Endothelial cell of umbilical vein (primary cell): ENCODE measurements at regions of chr2 and their contacts with region 1.

Region 1: DNA sequence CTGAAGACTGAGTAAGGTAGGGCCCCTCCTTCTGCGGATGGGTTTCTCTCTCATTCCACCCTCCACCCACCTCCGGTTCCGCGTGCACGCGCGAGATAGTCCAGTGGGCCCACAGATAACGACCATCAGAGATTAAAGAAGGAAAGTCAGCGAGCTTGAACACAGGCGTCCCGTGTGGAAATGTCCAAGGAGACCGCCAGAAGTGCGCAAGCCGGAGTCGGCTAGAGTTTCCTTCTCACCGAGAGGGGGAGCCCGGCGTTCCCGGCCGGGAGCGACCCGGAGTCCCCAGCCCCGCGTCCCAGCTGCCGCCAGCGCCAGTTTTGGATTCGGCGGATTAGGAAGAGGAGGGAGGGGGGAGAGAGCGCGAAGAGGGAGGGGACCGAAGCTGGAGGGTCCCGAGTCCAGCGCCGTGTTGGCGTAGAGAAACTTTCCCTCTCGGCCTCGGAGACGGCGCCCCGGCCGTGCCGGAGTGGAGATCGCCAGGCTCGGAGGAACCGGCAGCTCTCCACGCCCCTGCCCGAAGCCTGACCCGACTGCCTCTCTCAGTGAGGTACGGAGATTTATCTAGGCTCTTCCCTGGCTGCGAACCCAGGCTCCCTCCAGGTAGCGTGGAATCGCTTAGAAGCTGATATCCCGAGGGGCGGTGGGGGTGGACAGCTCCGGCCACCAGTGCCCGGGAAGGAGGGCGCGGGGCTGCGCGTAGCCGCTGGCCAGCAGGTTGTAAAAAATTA is at the start of gene GULP1:
- DNase-seq: peak; percentile 83
- H3K4me3 ChIP-seq: peak within 1 kb of the TSS; percentile 77 to 84 (median 81)
- H3K27ac ChIP-seq: peak within 1 kb of the TSS; percentile 86
- H3K4me1 ChIP-seq: peaks cover 30% of the 10 kb centered on the region
- H3K27me3 ChIP-seq: no peaks in the 10 kb centered on the region
- CTCF ChIP-seq: peak; percentile 67 to 85
- POLR2A ChIP-seq: no peak
- total RNA-seq, gene GULP1: 43.0 and 53.8 TPM in 2 replicates

Region 2: GRCh38 chr2:187499941-187500532 is 791.7 kb before region 1 on chr2:
- CTCF ChIA-PET with region 1: interaction called, 10 read pairs
- POLR2A ChIA-PET with region 1: no interaction called
- dilution Hi-C with region 1: no loop called
- intact Hi-C with region 1: loop called (anchors 1 kb)
- DNase-seq: peak; percentile 75
- H3K4me3 ChIP-seq: no peak overlapping the region
- H3K27ac ChIP-seq: peak overlapping the region; percentile 19
- H3K4me1 ChIP-seq: peaks cover 50% of the 10 kb centered on the region
- H3K27me3 ChIP-seq: no peaks in the 10 kb centered on the region
- CTCF ChIP-seq: peak; percentile 48 to 58
- POLR2A ChIP-seq: no peak

Region 3: DNA sequence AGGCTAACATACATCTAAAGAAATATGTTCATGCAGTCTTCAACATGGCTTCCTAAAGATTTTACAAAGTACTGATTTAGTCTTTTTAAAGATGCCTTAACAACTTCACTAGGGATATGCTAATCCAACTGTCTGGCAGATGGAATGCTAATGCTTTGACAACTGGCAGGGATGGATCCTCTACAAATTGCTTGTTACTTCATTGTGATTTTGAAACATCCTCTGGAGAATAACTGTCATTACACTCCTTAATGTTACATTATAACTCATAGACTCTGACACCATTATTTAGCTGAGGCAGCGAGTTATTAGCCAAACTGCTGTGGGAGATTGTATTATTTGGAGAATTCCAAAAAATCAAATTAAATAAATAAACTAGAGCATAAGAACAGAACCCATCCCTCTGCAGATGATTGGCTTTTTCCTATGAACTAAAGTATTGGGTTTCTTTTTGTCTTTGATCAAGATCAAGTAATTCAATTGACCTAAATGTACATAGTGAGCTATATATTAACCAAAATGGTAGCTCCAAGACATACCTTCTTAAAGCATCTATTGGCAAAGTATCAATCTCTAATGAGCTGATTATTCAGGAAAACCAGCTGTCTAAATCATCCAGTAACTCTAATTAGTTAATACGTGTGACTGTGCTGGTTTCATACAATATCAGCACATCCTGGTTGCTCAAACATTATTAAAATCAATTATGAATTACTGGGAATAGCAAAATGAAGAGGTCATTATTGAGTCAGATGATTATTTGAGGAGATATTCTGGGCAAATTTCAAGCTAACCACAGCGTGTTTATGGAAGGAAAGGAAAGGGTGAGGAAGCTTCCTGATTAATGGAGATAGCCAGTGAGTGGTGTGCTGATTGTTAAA is 416.3 kb before region 1 on chr2:
- CTCF ChIA-PET with region 1: no interaction called
- POLR2A ChIA-PET with region 1: no interaction called
- dilution Hi-C with region 1: no loop called
- intact Hi-C with region 1: loop called (anchors 5 kb)
- DNase-seq: peak; percentile 83
- H3K4me3 ChIP-seq: no peak overlapping the region
- H3K27ac ChIP-seq: peak overlapping the region; percentile 40
- H3K4me1 ChIP-seq: peaks cover 37% of the 10 kb centered on the region
- H3K27me3 ChIP-seq: no peaks in the 10 kb centered on the region
- CTCF ChIP-seq: no peak
- POLR2A ChIP-seq: peak; percentile 16

Region 4: DNA sequence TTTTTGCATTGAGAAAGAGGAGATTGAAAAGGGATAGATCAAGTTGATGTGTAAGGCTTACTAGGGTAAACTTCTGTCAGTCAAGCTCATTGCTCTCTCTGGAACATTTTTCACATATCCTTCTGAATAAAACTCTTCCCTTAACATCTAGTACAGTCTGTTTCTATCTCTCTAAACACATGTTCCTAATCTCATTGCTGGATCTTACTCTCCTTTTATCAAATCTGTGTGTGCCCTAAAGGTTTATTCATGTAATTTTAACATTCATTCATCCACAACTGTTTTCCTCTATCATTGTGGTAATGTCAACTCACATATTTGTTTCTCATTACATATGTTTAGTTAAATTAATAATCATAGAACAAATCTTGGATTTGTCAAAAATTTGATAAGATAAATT is 278.0 kb before region 1 on chr2:
- CTCF ChIA-PET with region 1: no interaction called
- POLR2A ChIA-PET with region 1: no interaction called
- dilution Hi-C with region 1: no loop called
- intact Hi-C with region 1: no loop called
- DNase-seq: no peak
- H3K4me3 ChIP-seq: no peak overlapping the region
- H3K27ac ChIP-seq: no peak overlapping the region
- H3K4me1 ChIP-seq: no peaks in the 10 kb centered on the region
- H3K27me3 ChIP-seq: no peaks in the 10 kb centered on the region
- CTCF ChIP-seq: no peak
- POLR2A ChIP-seq: no peak

Region 5: GRCh38 chr2:188256420-188256819 is 35.4 kb before region 1 on chr2:
- CTCF ChIA-PET with region 1: no interaction called
- POLR2A ChIA-PET with region 1: no interaction called
- dilution Hi-C with region 1: no loop called
- intact Hi-C with region 1: no loop called
- DNase-seq: no peak
- H3K4me3 ChIP-seq: no peak overlapping the region
- H3K27ac ChIP-seq: no peak overlapping the region
- H3K4me1 ChIP-seq: no peaks in the 10 kb centered on the region
- H3K27me3 ChIP-seq: no peaks in the 10 kb centered on the region
- CTCF ChIP-seq: no peak
- POLR2A ChIP-seq: no peak

Region 6: DNA sequence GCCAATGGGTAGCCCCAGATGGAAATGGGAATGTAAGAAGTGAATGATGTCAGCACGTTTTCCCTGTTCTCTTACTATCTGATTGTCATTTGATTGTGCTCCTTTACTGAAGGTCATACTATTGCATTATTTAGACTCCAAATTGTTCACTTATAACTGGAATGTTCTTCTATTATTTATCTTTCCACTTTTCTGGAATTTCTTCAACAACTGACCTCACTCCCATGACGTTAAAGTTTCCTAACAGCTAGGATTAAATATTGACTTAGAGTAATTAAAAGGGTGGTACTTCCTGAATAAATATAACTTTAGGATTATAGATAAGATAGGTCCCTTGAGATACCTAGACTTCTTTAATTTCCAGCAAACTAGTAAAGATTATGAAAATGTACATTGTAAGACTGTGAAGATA is 11.0 kb before region 1 on chr2:
- CTCF ChIA-PET with region 1: interaction called, 13 read pairs
- POLR2A ChIA-PET with region 1: no interaction called
- dilution Hi-C with region 1: no loop called
- intact Hi-C with region 1: no loop called
- DNase-seq: peak; percentile 31
- H3K4me3 ChIP-seq: no peak overlapping the region
- H3K27ac ChIP-seq: no peak overlapping the region
- H3K4me1 ChIP-seq: no peaks in the 10 kb centered on the region
- H3K27me3 ChIP-seq: no peaks in the 10 kb centered on the region
- CTCF ChIP-seq: no peak
- POLR2A ChIP-seq: no peak

Region 7: DNA sequence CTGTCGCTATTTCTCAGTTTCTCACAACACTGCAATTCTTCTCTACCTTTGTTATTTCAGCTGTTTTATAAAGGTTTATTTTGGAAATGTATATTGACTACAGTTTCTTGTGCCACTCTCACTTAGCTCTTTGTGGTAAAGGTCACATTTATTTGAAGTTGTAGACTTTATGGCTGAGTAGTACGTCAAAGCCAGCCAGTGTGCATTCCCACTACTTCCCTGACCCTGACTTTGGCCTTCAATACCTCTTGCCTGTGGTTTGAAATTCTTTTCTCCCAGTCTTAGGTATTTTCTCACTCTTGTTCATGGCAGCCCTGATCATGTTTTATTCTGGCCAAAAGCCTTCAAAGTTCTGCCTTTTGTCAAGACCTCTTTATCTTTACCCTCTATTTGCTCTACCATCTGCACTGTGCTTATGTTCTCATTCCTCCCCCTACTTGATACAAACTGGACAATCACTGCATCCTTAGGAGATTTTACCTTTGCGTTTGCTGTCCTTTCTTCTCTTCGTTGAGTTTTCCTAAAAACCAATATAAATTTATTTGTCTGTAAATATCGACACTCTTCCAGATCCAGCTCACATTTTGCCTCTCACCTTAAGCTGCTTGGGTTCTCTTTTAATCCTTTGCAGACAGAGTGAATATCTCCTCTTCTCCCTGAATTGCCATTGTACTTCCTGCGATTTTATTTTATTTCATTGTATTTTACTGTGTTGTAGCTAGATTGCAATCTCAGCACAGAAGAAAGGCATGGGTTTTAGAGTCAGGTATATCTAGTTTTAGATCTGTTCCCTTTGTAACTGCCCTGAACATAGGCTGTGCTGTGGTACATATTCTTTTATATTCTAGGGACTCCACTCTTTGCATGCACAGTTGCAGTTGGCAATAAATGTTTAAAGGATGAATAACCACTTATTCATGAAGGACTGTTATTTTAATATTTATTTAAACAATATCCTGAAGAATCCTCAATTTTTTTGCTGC is 31.1 kb after region 1 on chr2:
- CTCF ChIA-PET with region 1: interaction called, 30 read pairs
- POLR2A ChIA-PET with region 1: interaction called, 4 read pairs
- dilution Hi-C with region 1: no loop called
- intact Hi-C with region 1: no loop called
- DNase-seq: peak; percentile 60
- H3K4me3 ChIP-seq: no peak overlapping the region
- H3K27ac ChIP-seq: peak overlapping the region; percentile 50
- H3K4me1 ChIP-seq: peaks cover 65% of the 10 kb centered on the region
- H3K27me3 ChIP-seq: no peaks in the 10 kb centered on the region
- CTCF ChIP-seq: no peak
- POLR2A ChIP-seq: no peak

Region 8: DNA sequence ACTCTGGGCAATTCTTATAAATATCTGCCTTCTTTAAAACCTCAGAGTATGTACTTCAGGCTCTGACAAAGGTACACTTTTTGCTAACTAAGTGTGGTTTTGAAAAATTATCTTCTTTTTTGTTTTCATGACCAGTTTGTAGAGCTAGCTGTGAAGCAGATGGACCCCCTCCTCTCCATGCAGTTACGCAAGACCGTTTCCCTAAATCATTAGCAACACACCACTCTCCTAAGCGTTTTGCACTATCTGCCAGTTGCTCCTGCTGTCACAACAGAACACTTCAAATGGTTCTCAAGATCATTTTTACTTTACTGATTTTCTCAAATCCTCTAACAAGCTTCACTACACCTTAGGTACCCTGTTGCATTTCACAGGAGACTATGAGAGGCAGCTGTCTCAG is 53.2 kb after region 1 on chr2:
- CTCF ChIA-PET with region 1: no interaction called
- POLR2A ChIA-PET with region 1: no interaction called
- dilution Hi-C with region 1: no loop called
- intact Hi-C with region 1: no loop called
- DNase-seq: no peak
- H3K4me3 ChIP-seq: no peak overlapping the region
- H3K27ac ChIP-seq: no peak overlapping the region
- H3K4me1 ChIP-seq: peaks cover 2% of the 10 kb centered on the region
- H3K27me3 ChIP-seq: no peaks in the 10 kb centered on the region
- CTCF ChIP-seq: no peak
- POLR2A ChIP-seq: no peak

Region 9: GRCh38 chr2:188444106-188444835 is 152.5 kb after region 1 on chr2:
- CTCF ChIA-PET with region 1: no interaction called
- POLR2A ChIA-PET with region 1: no interaction called
- dilution Hi-C with region 1: no loop called
- intact Hi-C with region 1: loop called (anchors 1 kb)
- DNase-seq: peak; percentile 83
- H3K4me3 ChIP-seq: no peak overlapping the region
- H3K27ac ChIP-seq: no peak overlapping the region
- H3K4me1 ChIP-seq: peaks cover 10% of the 10 kb centered on the region
- H3K27me3 ChIP-seq: no peaks in the 10 kb centered on the region
- CTCF ChIP-seq: no peak
- POLR2A ChIP-seq: no peak